ENCODE measurements at regions of chr9 and their contacts with region 1.

Region 1: DNA sequence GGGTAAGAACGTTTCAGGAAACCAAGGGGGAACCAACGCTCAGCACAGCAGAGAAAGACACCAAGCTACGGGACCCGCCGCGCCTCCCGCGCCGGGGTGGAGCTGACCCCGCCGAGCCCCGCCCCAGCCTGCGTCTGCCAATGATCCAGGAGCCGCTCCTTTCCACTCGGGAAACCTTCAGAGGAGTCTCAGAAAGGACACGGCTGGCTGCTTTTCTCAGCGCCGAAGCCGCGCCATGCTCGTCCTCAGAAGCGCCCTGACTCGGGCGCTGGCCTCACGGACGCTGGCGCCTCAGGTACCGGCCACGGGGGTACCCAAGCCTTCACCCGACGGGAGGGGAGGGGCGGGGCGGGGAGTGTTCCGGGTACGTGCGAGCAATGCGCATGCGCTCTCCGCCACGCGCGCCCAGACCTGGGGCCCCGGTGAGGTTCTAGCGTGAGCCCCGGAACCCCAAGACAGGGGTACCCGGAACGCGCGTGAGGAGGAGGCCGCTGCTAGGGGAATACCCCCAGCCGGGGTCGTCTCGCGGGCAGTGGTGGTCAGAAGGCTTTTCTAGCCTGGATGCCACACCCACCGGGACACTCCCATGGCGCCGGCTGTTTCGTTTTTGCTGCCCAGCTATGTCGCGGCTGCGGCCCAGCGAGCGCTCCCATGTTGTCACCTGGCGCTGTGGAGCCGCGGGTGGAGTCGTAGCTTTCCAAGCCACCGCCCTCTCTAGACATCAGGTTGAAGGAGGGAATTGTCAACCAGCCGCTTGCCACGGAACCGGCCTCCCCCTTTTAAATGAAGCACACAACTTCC is at the start of gene NIPSNAP3A:
- DNase-seq: peak; percentile 63
- ATAC-seq: peak; percentile 91
- H3K4me3 ChIP-seq: peak within 1 kb of the TSS; percentile 86
- H3K27ac ChIP-seq: peak within 1 kb of the TSS; percentile 82
- H3K4me1 ChIP-seq: peaks cover 12% of the 10 kb centered on the region; the same call in 1 of the 2 replicates
- H3K27me3 ChIP-seq: no peaks in the 10 kb centered on the region
- CTCF ChIP-seq: no peak
- EP300 ChIP-seq: no peak
- POLR2A ChIP-seq: peak; percentile 84
- RAD21 ChIP-seq: no peak
- polyA plus RNA-seq, gene NIPSNAP3A: 60.9 to 87.2 TPM

Region 2: GRCh38 chr9:103397868-103398600 is 1349.7 kb before region 1 on chr9:
- CTCF ChIA-PET with region 1: interaction called, 6 read pairs
- POLR2A ChIA-PET with region 1: no interaction called
- RAD21 ChIA-PET with region 1: no interaction called
- SMC1A ChIA-PET with region 1: interaction called, 3 read pairs
- in situ Hi-C with region 1: no loop called
- intact Hi-C with region 1: loop called (anchors 2 kb)
- DNase-seq: no peak
- ATAC-seq: peak; percentile 88
- H3K4me3 ChIP-seq: no peak overlapping the region
- H3K27ac ChIP-seq: no peak overlapping the region
- H3K4me1 ChIP-seq: no peaks in the 10 kb centered on the region
- H3K27me3 ChIP-seq: no peaks in the 10 kb centered on the region
- CTCF ChIP-seq: peak; percentile 71 to 72 (median 71); a peak in 5 of 6 replicates
- EP300 ChIP-seq: no peak
- POLR2A ChIP-seq: no peak
- RAD21 ChIP-seq: peak; percentile 64

Region 3: DNA sequence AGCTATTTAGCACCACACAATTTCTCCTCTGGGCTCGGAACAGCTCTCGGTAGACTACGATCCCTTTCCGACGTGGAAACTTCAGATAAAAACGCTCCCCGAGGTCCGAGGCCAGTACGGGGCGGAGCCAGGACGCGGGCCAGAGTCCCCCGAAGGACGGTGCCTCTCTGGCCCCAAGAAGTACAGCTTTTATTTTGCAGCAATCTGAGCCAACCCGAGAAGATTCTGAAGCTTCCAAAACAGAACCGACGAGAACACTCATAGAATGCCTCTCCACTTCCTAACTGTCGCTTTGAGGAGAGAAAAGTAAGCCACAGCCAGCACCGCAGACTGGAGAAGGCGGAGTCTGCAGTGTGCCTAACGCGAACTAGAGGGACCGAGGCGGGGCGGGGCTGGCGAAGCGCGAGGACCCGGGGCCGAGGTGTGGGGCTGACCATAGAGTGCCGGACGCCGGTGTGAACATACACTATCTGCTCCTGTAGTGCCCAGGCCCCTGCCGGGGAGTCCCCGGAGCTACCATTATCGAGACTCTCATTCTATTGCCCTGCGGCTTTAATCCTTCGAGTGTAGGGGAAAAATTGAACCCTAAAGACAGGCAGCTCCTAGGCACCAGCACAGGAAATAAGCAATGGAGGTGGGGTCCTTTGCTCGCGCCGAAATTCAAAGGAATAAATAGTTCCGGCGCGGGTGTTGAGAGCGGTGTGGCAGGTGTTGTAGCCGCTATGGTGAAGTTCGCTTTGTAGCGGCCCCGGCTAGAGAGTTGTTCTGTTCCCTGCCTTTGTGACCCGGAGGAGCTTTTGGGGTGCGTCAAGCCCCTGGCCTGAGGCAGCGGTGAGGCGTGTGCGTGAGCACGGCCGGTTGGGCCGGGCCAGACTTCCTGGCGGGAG is 653.9 kb before region 1 on chr9 and contains the start of gene SMC2:
- CTCF ChIA-PET with region 1: interaction called, 6 read pairs
- POLR2A ChIA-PET with region 1: interaction called, 3 read pairs
- RAD21 ChIA-PET with region 1: interaction called, 3 read pairs
- SMC1A ChIA-PET with region 1: interaction called, 4 read pairs
- in situ Hi-C with region 1: no loop called
- intact Hi-C with region 1: loop called (anchors 5 kb)
- DNase-seq: peak; percentile 85
- ATAC-seq: peak; percentile 89
- H3K4me3 ChIP-seq: peak within 1 kb of the TSS; percentile 99
- H3K27ac ChIP-seq: peak within 1 kb of the TSS; percentile 98
- H3K4me1 ChIP-seq: peaks cover 22% of the 10 kb centered on the region
- H3K27me3 ChIP-seq: no peaks in the 10 kb centered on the region
- CTCF ChIP-seq: no peak
- EP300 ChIP-seq: no peak
- POLR2A ChIP-seq: peak; percentile 89
- RAD21 ChIP-seq: no peak
- polyA plus RNA-seq, gene SMC2: 51.0 to 82.7 TPM

Region 4: GRCh38 chr9:104386425-104387069 is 361.2 kb before region 1 on chr9:
- CTCF ChIA-PET with region 1: interaction called, 9 read pairs
- POLR2A ChIA-PET with region 1: no interaction called
- RAD21 ChIA-PET with region 1: no interaction called
- SMC1A ChIA-PET with region 1: interaction called, 5 read pairs
- in situ Hi-C with region 1: no loop called
- intact Hi-C with region 1: loop called (anchors 10 kb)
- DNase-seq: no peak
- ATAC-seq: peak; percentile 74
- H3K4me3 ChIP-seq: no peak overlapping the region
- H3K27ac ChIP-seq: no peak overlapping the region
- H3K4me1 ChIP-seq: no peaks in the 10 kb centered on the region
- H3K27me3 ChIP-seq: no peaks in the 10 kb centered on the region
- CTCF ChIP-seq: peak; percentile 55 to 66 (median 64); a peak in 5 of 6 replicates
- EP300 ChIP-seq: no peak
- POLR2A ChIP-seq: no peak
- RAD21 ChIP-seq: peak; percentile 76

Region 5: GRCh38 chr9:104608336-104608735 is 139.4 kb before region 1 on chr9:
- CTCF ChIA-PET with region 1: interaction called, 3 read pairs
- POLR2A ChIA-PET with region 1: no interaction called
- RAD21 ChIA-PET with region 1: interaction called, 4 read pairs
- SMC1A ChIA-PET with region 1: interaction called, 3 read pairs
- in situ Hi-C with region 1: no loop called
- intact Hi-C with region 1: loop called (anchors 5 kb)
- DNase-seq: no peak
- ATAC-seq: no peak
- H3K4me3 ChIP-seq: no peak overlapping the region
- H3K27ac ChIP-seq: no peak overlapping the region
- H3K4me1 ChIP-seq: no peaks in the 10 kb centered on the region
- H3K27me3 ChIP-seq: no peaks in the 10 kb centered on the region
- CTCF ChIP-seq: no peak; a peak in 1 of 6 replicates
- EP300 ChIP-seq: no peak
- POLR2A ChIP-seq: no peak
- RAD21 ChIP-seq: no peak

Region 6: GRCh38 chr9:104700306-104701028 is 47.3 kb before region 1 on chr9:
- CTCF ChIA-PET with region 1: no interaction called
- POLR2A ChIA-PET with region 1: no interaction called
- RAD21 ChIA-PET with region 1: no interaction called
- SMC1A ChIA-PET with region 1: no interaction called
- in situ Hi-C with region 1: no loop called
- intact Hi-C with region 1: no loop called
- DNase-seq: no peak
- ATAC-seq: no peak
- H3K4me3 ChIP-seq: no peak overlapping the region
- H3K27ac ChIP-seq: no peak overlapping the region
- H3K4me1 ChIP-seq: no peaks in the 10 kb centered on the region
- H3K27me3 ChIP-seq: no peaks in the 10 kb centered on the region
- CTCF ChIP-seq: no peak
- EP300 ChIP-seq: no peak
- POLR2A ChIP-seq: no peak
- RAD21 ChIP-seq: no peak

Region 7: DNA sequence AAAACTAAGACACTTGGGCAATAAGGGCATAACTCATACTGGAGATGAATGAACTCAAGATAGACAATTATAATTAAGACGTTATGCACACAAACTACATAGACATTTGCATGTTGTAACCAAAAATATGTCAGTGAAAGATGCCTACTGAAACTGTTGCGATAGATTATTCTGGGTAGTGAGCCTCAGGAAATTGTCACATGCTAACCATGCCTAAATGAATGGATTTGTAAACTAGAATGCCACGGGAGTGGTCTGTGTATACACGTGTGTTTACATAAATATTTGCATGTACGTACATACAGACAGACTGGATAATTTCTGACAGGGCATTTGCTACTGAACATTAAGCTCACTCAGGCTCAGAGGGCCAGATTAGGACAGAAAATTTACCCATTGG is 17.4 kb after region 1 on chr9:
- CTCF ChIA-PET with region 1: interaction called, 35 read pairs
- POLR2A ChIA-PET with region 1: interaction called, 15 read pairs
- RAD21 ChIA-PET with region 1: interaction called, 22 read pairs
- SMC1A ChIA-PET with region 1: interaction called, 35 read pairs
- in situ Hi-C with region 1: no loop called
- intact Hi-C with region 1: loop called (anchors 2 kb)
- DNase-seq: no peak
- ATAC-seq: peak; percentile 63
- H3K4me3 ChIP-seq: peak overlapping the region; percentile 82
- H3K27ac ChIP-seq: no peak overlapping the region
- H3K4me1 ChIP-seq: peaks cover 12% of the 10 kb centered on the region
- H3K27me3 ChIP-seq: no peaks in the 10 kb centered on the region
- CTCF ChIP-seq: no peak
- EP300 ChIP-seq: no peak
- POLR2A ChIP-seq: no peak
- RAD21 ChIP-seq: no peak

Region 8: DNA sequence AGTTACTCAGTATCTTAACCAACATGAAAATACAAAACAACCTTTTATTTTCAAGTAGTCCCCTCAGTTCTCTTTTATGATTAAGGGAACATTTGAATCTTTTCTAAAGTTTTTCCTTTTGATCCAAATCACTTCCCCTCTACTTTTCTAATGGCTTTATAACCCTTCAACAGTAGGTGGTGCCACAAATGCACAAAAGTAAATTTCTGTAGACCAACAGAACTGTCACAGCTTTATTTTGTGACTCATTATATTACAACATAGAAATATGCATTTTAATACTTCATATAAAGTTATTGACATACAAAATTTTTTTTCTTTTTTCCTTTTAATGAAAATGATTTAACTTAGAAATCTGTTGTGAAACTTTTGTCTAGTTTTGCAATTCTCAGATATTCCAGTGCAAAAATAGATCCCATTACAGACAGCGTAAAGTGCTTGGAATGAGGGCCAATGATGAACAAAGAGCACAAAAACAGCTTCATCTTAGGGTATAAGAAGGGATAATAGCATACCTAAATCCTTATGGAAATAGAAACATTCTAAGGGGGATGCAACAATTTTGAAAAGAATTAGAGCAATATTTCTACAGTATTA is 33.1 kb after region 1 on chr9:
- CTCF ChIA-PET with region 1: interaction called, 15 read pairs
- POLR2A ChIA-PET with region 1: interaction called, 8 read pairs
- RAD21 ChIA-PET with region 1: interaction called, 30 read pairs
- SMC1A ChIA-PET with region 1: interaction called, 31 read pairs
- in situ Hi-C with region 1: no loop called
- intact Hi-C with region 1: no loop called
- DNase-seq: no peak
- ATAC-seq: peak; percentile 62
- H3K4me3 ChIP-seq: no peak overlapping the region
- H3K27ac ChIP-seq: no peak overlapping the region
- H3K4me1 ChIP-seq: peaks cover 13% of the 10 kb centered on the region
- H3K27me3 ChIP-seq: no peaks in the 10 kb centered on the region
- CTCF ChIP-seq: peak; percentile 34 to 63 (median 50); a peak in 5 of 6 replicates
- EP300 ChIP-seq: no peak
- POLR2A ChIP-seq: no peak
- RAD21 ChIP-seq: peak; percentile 86

Region 9: GRCh38 chr9:105039175-105039799 is 291.5 kb after region 1 on chr9:
- CTCF ChIA-PET with region 1: no interaction called
- POLR2A ChIA-PET with region 1: no interaction called
- RAD21 ChIA-PET with region 1: no interaction called
- SMC1A ChIA-PET with region 1: no interaction called
- in situ Hi-C with region 1: no loop called
- intact Hi-C with region 1: no loop called
- DNase-seq: no peak
- ATAC-seq: no peak
- H3K4me3 ChIP-seq: no peak overlapping the region
- H3K27ac ChIP-seq: no peak overlapping the region
- H3K4me1 ChIP-seq: no peaks in the 10 kb centered on the region
- H3K27me3 ChIP-seq: no peaks in the 10 kb centered on the region; a peak in 2 of 4 replicates
- CTCF ChIP-seq: no peak
- EP300 ChIP-seq: no peak
- POLR2A ChIP-seq: no peak
- RAD21 ChIP-seq: no peak